ENCODE measurements at regions of chr4 and their contacts with region 1.

Region 1: GRCh38 chr4:110193822-110194761 is 4.3 kb downstream of the ELOVL6 start:
- DNase-seq: peak; percentile 96
- H3K4me3 Mint-ChIP-seq: peak overlapping the region; percentile 31
- H3K27ac Mint-ChIP-seq: peak overlapping the region; percentile 78
- H3K4me1 Mint-ChIP-seq: peaks cover 16% of the 10 kb centered on the region
- H3K27me3 Mint-ChIP-seq: no peaks in the 10 kb centered on the region
- CTCF ChIP-seq: no peak

Region 2: DNA sequence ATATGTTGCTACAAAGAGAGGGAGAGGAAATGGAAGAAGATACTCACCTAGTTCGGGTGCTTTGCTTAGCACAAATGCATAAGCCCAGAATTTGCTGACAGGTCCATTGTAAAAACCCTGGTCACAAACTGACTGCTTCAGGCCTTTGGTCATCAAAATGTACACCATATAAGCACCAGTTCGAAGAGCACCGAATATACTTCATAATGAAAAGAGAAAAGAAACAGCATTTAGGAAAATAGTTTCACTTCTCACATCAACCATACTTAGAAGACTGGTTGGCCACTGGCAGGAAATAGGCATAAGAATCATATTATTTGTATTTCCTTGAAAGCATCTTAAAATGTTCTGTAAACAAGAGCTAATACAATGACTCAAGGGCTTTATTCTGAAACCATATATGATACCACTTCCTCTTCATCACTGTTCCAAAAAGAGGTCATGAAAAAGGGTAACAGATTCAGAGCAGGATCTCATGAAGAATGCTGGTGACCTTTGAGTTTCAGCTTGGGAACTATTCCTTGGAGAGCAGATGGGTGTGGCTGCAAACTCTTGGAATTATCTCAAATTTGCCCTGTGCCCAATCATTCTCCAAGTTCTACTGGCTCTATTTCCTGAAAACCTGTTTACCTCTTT is 134.4 kb before region 1 on chr4:
- CTCF ChIA-PET with region 1: interaction called, 3 read pairs
- POLR2A ChIA-PET with region 1: interaction called, 21 read pairs
- intact Hi-C with region 1: no loop called
- DNase-seq: peak; percentile 30
- H3K4me3 Mint-ChIP-seq: no peak overlapping the region
- H3K27ac Mint-ChIP-seq: no peak overlapping the region
- H3K4me1 Mint-ChIP-seq: peaks cover 22% of the 10 kb centered on the region
- H3K27me3 Mint-ChIP-seq: no peaks in the 10 kb centered on the region
- CTCF ChIP-seq: no peak

Region 3: GRCh38 chr4:110087070-110087708 is 106.9 kb before region 1 on chr4:
- CTCF ChIA-PET with region 1: interaction called, 5 read pairs
- POLR2A ChIA-PET with region 1: interaction called, 9 read pairs
- intact Hi-C with region 1: loop called (anchors 10 kb)
- DNase-seq: peak; percentile 81
- H3K4me3 Mint-ChIP-seq: no peak overlapping the region
- H3K27ac Mint-ChIP-seq: peak overlapping the region; percentile 61
- H3K4me1 Mint-ChIP-seq: peaks cover 36% of the 10 kb centered on the region
- H3K27me3 Mint-ChIP-seq: no peaks in the 10 kb centered on the region
- CTCF ChIP-seq: no peak

Region 4: DNA sequence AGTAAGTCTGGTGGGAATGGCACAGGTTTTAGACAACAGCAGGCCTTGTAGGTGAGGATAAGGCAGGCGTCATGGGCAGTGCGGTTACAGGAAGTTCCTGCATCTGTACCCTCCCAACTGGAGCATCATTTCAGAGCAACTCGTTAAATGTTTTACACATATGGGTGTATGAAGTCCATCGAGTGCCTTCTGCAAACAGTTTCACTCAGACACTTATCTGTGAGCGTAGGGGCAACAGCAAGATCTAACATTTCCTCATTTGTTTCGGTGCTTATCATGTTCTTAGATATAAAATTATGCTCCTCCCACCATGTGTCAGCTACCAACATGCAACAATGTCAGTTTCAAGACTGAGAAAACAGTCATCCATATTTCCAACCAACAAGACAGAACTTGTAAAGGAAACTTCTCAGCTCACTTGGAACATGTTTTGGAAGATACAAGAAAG is 65.6 kb before region 1 on chr4:
- CTCF ChIA-PET with region 1: no interaction called
- POLR2A ChIA-PET with region 1: interaction called, 39 read pairs
- intact Hi-C with region 1: no loop called
- DNase-seq: peak; percentile 53
- H3K4me3 Mint-ChIP-seq: no peak overlapping the region
- H3K27ac Mint-ChIP-seq: peak overlapping the region; percentile 61
- H3K4me1 Mint-ChIP-seq: peaks cover 20% of the 10 kb centered on the region
- H3K27me3 Mint-ChIP-seq: no peaks in the 10 kb centered on the region
- CTCF ChIP-seq: no peak

Region 5: GRCh38 chr4:110165382-110166285 is 28.5 kb before region 1 on chr4:
- CTCF ChIA-PET with region 1: interaction called, 6 read pairs
- POLR2A ChIA-PET with region 1: interaction called, 31 read pairs
- intact Hi-C with region 1: loop called (anchors 2 kb)
- DNase-seq: peak; percentile 72
- H3K4me3 Mint-ChIP-seq: no peak overlapping the region
- H3K27ac Mint-ChIP-seq: peak overlapping the region; percentile 86
- H3K4me1 Mint-ChIP-seq: peaks cover 25% of the 10 kb centered on the region
- H3K27me3 Mint-ChIP-seq: no peaks in the 10 kb centered on the region
- CTCF ChIP-seq: no peak

Region 6: GRCh38 chr4:110335399-110335798 is 141.3 kb after region 1 on chr4:
- CTCF ChIA-PET with region 1: no interaction called
- POLR2A ChIA-PET with region 1: no interaction called
- intact Hi-C with region 1: no loop called
- DNase-seq: no peak
- H3K4me3 Mint-ChIP-seq: no peak overlapping the region
- H3K27ac Mint-ChIP-seq: no peak overlapping the region
- H3K4me1 Mint-ChIP-seq: no peaks in the 10 kb centered on the region
- H3K27me3 Mint-ChIP-seq: peaks cover 39% of the 10 kb centered on the region
- CTCF ChIP-seq: no peak

Region 7: GRCh38 chr4:110371016-110371770 is 177.1 kb after region 1 on chr4:
- CTCF ChIA-PET with region 1: no interaction called
- POLR2A ChIA-PET with region 1: no interaction called
- intact Hi-C with region 1: no loop called
- DNase-seq: no peak
- H3K4me3 Mint-ChIP-seq: no peak overlapping the region
- H3K27ac Mint-ChIP-seq: no peak overlapping the region
- H3K4me1 Mint-ChIP-seq: no peaks in the 10 kb centered on the region
- H3K27me3 Mint-ChIP-seq: peaks cover 12% of the 10 kb centered on the region
- CTCF ChIP-seq: no peak

Region 8: GRCh38 chr4:110381784-110382183 is 187.7 kb after region 1 on chr4:
- CTCF ChIA-PET with region 1: no interaction called
- POLR2A ChIA-PET with region 1: no interaction called
- intact Hi-C with region 1: no loop called
- DNase-seq: no peak
- H3K4me3 Mint-ChIP-seq: no peak overlapping the region
- H3K27ac Mint-ChIP-seq: no peak overlapping the region
- H3K4me1 Mint-ChIP-seq: no peaks in the 10 kb centered on the region
- H3K27me3 Mint-ChIP-seq: no peaks in the 10 kb centered on the region
- CTCF ChIP-seq: no peak

Region 9: GRCh38 chr4:110510955-110511544 is 317.0 kb after region 1 on chr4:
- CTCF ChIA-PET with region 1: interaction called, 6 read pairs
- POLR2A ChIA-PET with region 1: interaction called, 5 read pairs
- intact Hi-C with region 1: loop called (anchors 5 kb)
- DNase-seq: peak; percentile 68
- H3K4me3 Mint-ChIP-seq: no peak overlapping the region
- H3K27ac Mint-ChIP-seq: no peak overlapping the region
- H3K4me1 Mint-ChIP-seq: no peaks in the 10 kb centered on the region
- H3K27me3 Mint-ChIP-seq: no peaks in the 10 kb centered on the region
- CTCF ChIP-seq: peak; percentile 84